H1 (cell line): ENCODE measurements at regions of chr7 and their contacts with region 1.

Region 1: DNA sequence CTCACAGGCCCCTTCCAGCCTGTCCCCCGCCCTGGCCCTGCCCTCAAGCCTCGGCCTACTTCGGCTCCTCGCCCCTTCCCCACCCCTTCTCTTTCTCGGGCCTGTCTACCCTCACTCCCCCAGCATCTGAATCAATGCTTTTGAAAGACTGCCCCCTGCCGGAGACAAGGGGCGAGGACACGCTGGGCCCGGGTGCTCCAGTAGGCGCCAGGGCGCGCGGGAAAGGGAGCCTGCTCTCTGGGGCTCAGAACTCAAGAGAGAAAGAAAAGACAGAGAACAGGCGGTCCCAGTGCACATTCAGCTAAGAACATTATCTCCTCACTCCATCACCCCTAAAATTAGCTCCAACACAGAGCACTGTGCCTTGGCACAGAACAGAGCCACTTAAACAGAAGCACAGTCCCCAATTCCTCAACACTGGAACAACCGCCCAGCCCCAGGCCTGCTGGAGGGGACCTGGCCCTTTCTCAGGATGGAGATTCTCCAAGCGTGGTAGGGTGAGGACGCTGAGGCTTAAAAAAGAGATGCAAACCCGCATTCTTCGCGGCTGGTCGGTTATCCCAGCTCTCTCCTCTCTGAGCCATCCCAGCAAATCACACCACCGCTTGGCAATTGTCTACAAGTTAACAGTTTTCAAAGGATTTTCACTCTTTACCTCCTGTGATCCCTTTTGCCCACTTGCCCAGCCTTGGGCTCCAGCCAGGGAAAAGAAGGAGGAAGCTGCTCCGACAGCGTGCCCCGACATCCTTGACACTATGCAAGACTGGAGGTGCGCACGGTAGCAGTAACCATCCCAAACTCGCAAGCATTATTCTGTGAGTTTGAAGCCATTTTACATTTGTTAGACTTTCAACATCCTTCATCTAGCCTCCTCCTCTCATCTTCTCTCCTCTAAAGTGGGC is 2.1 kb downstream of the GIGYF1 start:
- DNase-seq: peak; percentile 54 to 96
- H3K4me3 ChIP-seq: peak overlapping the region; percentile 82 to 95 (median 90)
- H3K27ac ChIP-seq: no peak overlapping the region
- H3K4me1 ChIP-seq: peaks cover 6 to 20% (median 12%) of the 10 kb centered on the region in 4 experiments
- H3K27me3 ChIP-seq: no peaks in the 10 kb centered on the region
- CTCF ChIP-seq: peak in 2 of 3 experiments; percentile 87 to 93; a peak in 3 of 4 replicates
- EP300 ChIP-seq: no peak
- POLR2A ChIP-seq: peak in 1 of 2 experiments; percentile 66; a peak in 1 of 3 replicates
- RAD21 ChIP-seq: peak; percentile 66 to 80

Region 2: DNA sequence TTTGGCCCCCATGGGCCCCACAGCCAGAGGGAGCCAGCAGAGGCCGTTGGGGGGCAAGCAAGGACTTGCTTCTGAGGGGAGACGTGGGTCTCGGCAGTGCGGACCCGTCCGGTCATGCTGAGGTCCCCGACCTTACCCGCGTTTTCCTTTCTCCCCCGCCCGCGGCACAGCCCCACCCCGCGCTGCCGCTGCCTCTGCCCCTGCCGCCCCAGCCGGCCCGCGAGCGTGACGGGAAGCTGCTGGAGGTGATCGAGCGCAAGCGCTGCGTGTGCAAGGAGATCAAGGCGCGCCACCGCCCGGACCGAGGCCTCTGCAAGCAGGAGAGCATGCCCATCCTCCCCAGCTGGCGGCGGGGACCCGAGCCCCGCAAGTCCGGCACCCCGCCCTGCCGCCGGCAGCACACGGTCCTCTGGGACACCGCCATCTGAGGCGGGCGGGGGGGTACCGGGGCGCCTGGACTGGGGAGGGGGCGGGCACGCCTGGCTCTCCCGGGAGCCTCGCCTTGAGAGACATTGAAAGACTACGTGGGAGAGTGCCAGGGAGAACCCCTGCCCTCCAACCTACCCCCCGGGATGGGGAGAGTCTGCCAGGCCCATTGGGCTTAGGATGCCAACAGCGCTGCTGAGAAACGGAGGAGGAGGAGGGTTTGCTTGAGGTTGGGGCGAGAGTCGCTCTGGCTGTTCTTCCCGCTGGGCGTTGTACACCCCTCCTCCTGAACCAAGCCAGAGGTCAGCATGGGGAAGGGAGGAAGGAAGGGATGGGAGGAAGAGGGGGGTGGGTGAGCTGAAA is 198.3 kb before region 1 on chr7:
- CTCF ChIA-PET with region 1: no interaction called
- POLR2A ChIA-PET with region 1: no interaction called
- DNase-seq: peak in 1 of 2 experiments; percentile 73
- H3K4me3 ChIP-seq: peak overlapping the region; percentile 38 to 68 (median 43)
- H3K27ac ChIP-seq: no peak overlapping the region
- H3K4me1 ChIP-seq: peaks cover 2 to 16% (median 11%) of the 10 kb centered on the region in 4 experiments
- H3K27me3 ChIP-seq: peaks cover 0 to 4% (median 2%) of the 10 kb centered on the region in 4 experiments; a peak in 5 of 7 replicates
- CTCF ChIP-seq: peak in 1 of 3 experiments; percentile 2; a peak in 1 of 4 replicates
- EP300 ChIP-seq: no peak
- POLR2A ChIP-seq: no peak
- RAD21 ChIP-seq: no peak

Region 3: GRCh38 chr7:100552532-100552931 is 139.4 kb before region 1 on chr7:
- CTCF ChIA-PET with region 1: no interaction called
- POLR2A ChIA-PET with region 1: no interaction called
- DNase-seq: no peak
- H3K4me3 ChIP-seq: no peak overlapping the region
- H3K27ac ChIP-seq: no peak overlapping the region
- H3K4me1 ChIP-seq: peaks cover 0 to under 1% (median 0%) of the 10 kb centered on the region in 4 experiments; a peak in 1 of 7 replicates
- H3K27me3 ChIP-seq: no peaks in the 10 kb centered on the region
- CTCF ChIP-seq: no peak
- EP300 ChIP-seq: no peak
- POLR2A ChIP-seq: no peak
- RAD21 ChIP-seq: no peak

Region 4: GRCh38 chr7:100604028-100604975 is 87.6 kb before region 1 on chr7:
- CTCF ChIA-PET with region 1: interaction called, 39 read pairs
- POLR2A ChIA-PET with region 1: interaction called, 7 read pairs
- DNase-seq: peak in 1 of 2 experiments; percentile 92
- H3K4me3 ChIP-seq: peak overlapping the region; percentile 68 to 82 (median 78)
- H3K27ac ChIP-seq: peak overlapping the region; percentile 48; the same call in 1 of the 2 replicates
- H3K4me1 ChIP-seq: peaks cover 0 to 31% (median 20%) of the 10 kb centered on the region in 4 experiments; a peak in 6 of 7 replicates
- H3K27me3 ChIP-seq: peaks cover 0 to 10% (median 4%) of the 10 kb centered on the region in 4 experiments; a peak in 2 of 7 replicates
- CTCF ChIP-seq: peak in 1 of 3 experiments; percentile 27; a peak in 2 of 4 replicates
- EP300 ChIP-seq: no peak
- POLR2A ChIP-seq: peak in 1 of 2 experiments; percentile 88; a peak in 2 of 3 replicates
- RAD21 ChIP-seq: peak; percentile 12 to 16; a peak in 2 of 4 replicates

Region 5: GRCh38 chr7:100621554-100621953 is 70.4 kb before region 1 on chr7:
- CTCF ChIA-PET with region 1: interaction called, 65 read pairs
- POLR2A ChIA-PET with region 1: no interaction called
- DNase-seq: no peak
- H3K4me3 ChIP-seq: no peak overlapping the region
- H3K27ac ChIP-seq: no peak overlapping the region
- H3K4me1 ChIP-seq: peaks cover 0 to 5% (median 0%) of the 10 kb centered on the region in 4 experiments; a peak in 1 of 7 replicates
- H3K27me3 ChIP-seq: peaks cover 0 to 5% (median 2%) of the 10 kb centered on the region in 4 experiments; a peak in 3 of 7 replicates
- CTCF ChIP-seq: no peak
- EP300 ChIP-seq: no peak
- POLR2A ChIP-seq: no peak
- RAD21 ChIP-seq: no peak

Region 6: DNA sequence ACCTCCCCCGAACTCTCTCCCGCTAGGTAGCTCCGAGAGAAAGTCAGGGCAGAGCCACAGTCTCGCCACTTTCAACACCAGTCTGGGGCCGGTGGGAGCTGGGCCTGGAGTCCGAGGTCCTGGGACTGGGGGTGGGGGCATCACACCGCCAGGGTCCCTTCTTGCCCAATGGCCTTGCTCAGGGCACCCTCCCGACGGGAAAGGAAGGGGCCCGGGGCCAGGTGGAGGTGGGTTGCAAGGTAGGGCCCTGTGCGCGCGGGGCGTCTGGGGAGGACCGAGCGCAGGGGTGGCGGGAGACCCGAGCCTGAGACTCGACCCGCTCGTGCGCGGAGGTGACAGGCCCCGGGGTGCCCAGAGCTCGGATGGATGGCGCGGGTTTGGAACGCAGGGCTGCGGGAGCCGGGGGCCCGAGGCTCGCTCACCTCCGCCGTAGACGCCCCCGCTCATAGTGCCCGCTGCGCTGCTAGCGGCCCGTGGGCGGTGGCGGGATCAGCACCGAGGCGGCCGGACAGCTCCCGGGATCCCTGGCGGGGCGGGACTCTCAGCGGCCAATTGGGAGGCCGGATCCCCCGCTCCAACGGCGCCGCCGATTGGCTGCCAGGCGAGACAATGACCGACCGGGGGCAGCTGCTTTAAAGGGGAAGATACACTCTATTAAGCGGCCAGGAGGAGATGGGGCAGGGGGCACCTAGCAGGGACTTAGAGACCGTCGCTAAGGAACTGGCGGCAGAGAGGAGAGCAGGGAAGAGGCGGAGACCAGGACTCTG is 35.8 kb before region 1 on chr7 and contains the start of gene ACTL6B:
- CTCF ChIA-PET with region 1: interaction called, 11 read pairs
- POLR2A ChIA-PET with region 1: interaction called, 6 read pairs
- DNase-seq: peak in 1 of 2 experiments; percentile 99
- H3K4me3 ChIP-seq: peak within 1 kb of the TSS; percentile 9 to 45 (median 24); a peak in 6 of 8 replicates
- H3K27ac ChIP-seq: no peak within 1 kb of the TSS
- H3K4me1 ChIP-seq: peaks cover 0 to 5% (median 0%) of the 10 kb centered on the region in 4 experiments; a peak in 2 of 7 replicates
- H3K27me3 ChIP-seq: peaks cover 10 to 35% (median 23%) of the 10 kb centered on the region in 4 experiments
- CTCF ChIP-seq: no peak
- EP300 ChIP-seq: no peak
- POLR2A ChIP-seq: no peak
- RAD21 ChIP-seq: no peak
- total RNA-seq, gene ACTL6B: 1.7 and 2.1 TPM in 2 replicates

Region 7: DNA sequence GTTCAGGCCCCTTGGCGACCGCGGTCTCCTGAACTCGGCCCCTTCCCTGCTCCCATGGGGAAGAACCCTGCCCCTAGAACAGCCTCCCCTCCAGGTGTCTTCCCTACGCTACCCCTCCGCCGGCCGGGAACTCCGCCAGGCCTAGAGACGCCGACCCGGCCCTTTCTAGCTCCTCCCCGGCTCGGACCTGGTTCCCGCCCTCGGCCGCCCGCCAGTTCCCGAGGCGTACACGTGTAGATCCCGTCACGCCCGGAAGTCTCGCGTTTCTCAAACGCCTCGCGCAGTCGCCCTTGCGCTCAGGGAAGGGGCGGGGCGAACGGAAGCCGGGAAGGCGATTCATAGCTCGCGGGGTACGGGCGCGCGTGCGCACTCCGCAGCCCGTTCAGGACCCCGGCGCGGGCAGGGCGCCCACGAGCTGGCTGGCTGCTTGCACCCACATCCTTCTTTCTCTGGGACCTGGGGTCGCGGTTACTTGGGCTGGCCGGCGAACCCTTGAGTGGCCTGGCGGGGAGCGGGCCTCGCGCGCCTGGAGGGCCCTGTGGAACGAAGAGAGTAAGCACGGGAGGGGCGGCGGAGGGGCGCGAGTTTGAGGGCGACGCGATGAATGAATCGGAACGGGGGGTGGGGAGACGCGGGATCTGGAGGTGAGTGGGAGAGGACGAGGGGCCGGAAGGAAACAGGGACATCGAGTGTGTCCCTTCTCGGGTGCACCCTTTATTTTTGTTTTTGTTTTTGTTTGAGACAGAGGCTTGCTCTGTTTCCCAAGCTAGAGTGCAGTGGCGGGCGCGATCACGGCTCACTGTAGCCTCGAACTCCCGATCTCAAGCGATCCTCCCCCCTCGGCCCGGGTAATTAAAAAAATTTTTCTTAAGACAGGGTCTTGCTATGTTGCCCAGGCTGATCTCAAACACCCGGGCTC is 14.1 kb after region 1 on chr7 and contains the start of gene POP7:
- CTCF ChIA-PET with region 1: interaction called, 254 read pairs
- POLR2A ChIA-PET with region 1: interaction called, 58 read pairs
- DNase-seq: peak; percentile 94 to 99
- H3K4me3 ChIP-seq: peak within 1 kb of the TSS; percentile 83 to 94 (median 90)
- H3K27ac ChIP-seq: peak within 1 kb of the TSS; percentile 86
- H3K4me1 ChIP-seq: peaks cover 0 to 11% (median 2%) of the 10 kb centered on the region in 4 experiments; a peak in 3 of 7 replicates
- H3K27me3 ChIP-seq: no peaks in the 10 kb centered on the region
- CTCF ChIP-seq: no peak
- EP300 ChIP-seq: peak in 1 of 2 experiments; percentile 54; a peak in 1 of 3 replicates
- POLR2A ChIP-seq: peak; percentile 79 to 81
- RAD21 ChIP-seq: no peak
- total RNA-seq, gene POP7: 92.5 and 96.7 TPM in 2 replicates